Endothelial cell of umbilical vein (primary cell): ENCODE measurements at regions of chr1 and their contacts with region 1.

Region 1: GRCh38 chr1:151340870-151341754 is 5.9 kb downstream of the RFX5 start:
- DNase-seq: peak; percentile 81
- H3K4me3 ChIP-seq: no peak overlapping the region
- H3K27ac ChIP-seq: no peak overlapping the region
- H3K4me1 ChIP-seq: peaks cover 8% of the 10 kb centered on the region
- H3K27me3 ChIP-seq: no peaks in the 10 kb centered on the region
- CTCF ChIP-seq: peak; percentile 51 to 74
- POLR2A ChIP-seq: no peak

Region 2: GRCh38 chr1:151254217-151255213 is 86.6 kb before region 1 on chr1 and contains the start of gene PSMD4:
- CTCF ChIA-PET with region 1: interaction called, 11 read pairs
- POLR2A ChIA-PET with region 1: no interaction called
- dilution Hi-C with region 1: no loop called
- intact Hi-C with region 1: no loop called
- DNase-seq: peak; percentile 98
- H3K4me3 ChIP-seq: peak within 1 kb of the TSS; percentile 82 to 96 (median 87)
- H3K27ac ChIP-seq: peak within 1 kb of the TSS; percentile 80
- H3K4me1 ChIP-seq: peaks cover 7% of the 10 kb centered on the region
- H3K27me3 ChIP-seq: no peaks in the 10 kb centered on the region
- CTCF ChIP-seq: no peak
- POLR2A ChIP-seq: peak; percentile 96
- total RNA-seq, gene PSMD4: 181 and 184 TPM in 2 replicates

Region 3: DNA sequence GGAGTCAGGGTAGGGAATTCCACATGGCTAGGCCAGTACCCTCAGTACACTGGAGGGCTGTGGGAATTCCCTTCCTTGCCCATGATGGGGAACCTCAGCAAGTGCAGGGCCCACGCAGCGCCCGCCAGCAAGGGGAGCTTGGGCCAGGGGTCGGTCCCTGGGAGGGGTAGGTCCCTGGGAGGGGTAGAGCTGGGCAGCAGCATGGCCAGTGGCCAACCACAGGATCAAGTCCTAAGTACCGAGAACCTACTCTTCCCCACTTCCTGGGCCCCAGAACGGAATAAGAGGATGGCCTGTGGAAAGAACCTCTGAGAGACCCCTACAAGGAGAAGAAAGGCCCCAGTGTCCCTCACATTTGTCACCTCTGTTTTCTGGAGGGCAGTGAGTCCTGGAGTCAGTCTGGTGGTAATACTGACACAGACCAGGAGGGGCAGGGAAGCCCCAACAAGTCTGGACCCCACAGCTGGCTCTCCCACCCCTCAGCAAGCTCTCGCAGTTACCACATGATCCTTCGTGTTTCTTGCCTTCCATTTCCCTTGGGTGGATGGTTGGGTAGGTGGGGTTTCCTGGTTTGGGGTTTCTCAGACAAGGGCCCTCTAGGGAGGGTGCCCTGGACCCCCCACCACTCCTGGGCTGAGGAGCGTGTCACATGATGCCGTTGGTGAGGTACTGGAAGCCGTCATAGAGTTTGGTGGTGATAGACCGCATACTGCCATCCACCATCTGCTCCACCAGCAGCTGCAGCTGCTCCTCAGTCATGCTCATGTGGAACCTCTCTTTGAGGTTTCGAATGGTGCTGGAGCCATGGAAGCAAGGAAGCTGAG is 48.7 kb before region 1 on chr1:
- CTCF ChIA-PET with region 1: interaction called, 674 read pairs
- POLR2A ChIA-PET with region 1: no interaction called
- dilution Hi-C with region 1: no loop called
- intact Hi-C with region 1: no loop called
- DNase-seq: no peak
- H3K4me3 ChIP-seq: no peak overlapping the region
- H3K27ac ChIP-seq: no peak overlapping the region
- H3K4me1 ChIP-seq: no peaks in the 10 kb centered on the region
- H3K27me3 ChIP-seq: no peaks in the 10 kb centered on the region
- CTCF ChIP-seq: no peak
- POLR2A ChIP-seq: no peak

Region 4: GRCh38 chr1:151318745-151319374 is 22.3 kb before region 1 on chr1:
- CTCF ChIA-PET with region 1: interaction called, 674 read pairs
- POLR2A ChIA-PET with region 1: no interaction called
- dilution Hi-C with region 1: no loop called
- intact Hi-C with region 1: no loop called
- DNase-seq: no peak
- H3K4me3 ChIP-seq: no peak overlapping the region
- H3K27ac ChIP-seq: no peak overlapping the region
- H3K4me1 ChIP-seq: peaks cover 9% of the 10 kb centered on the region
- H3K27me3 ChIP-seq: no peaks in the 10 kb centered on the region
- CTCF ChIP-seq: no peak
- POLR2A ChIP-seq: no peak

Region 5: DNA sequence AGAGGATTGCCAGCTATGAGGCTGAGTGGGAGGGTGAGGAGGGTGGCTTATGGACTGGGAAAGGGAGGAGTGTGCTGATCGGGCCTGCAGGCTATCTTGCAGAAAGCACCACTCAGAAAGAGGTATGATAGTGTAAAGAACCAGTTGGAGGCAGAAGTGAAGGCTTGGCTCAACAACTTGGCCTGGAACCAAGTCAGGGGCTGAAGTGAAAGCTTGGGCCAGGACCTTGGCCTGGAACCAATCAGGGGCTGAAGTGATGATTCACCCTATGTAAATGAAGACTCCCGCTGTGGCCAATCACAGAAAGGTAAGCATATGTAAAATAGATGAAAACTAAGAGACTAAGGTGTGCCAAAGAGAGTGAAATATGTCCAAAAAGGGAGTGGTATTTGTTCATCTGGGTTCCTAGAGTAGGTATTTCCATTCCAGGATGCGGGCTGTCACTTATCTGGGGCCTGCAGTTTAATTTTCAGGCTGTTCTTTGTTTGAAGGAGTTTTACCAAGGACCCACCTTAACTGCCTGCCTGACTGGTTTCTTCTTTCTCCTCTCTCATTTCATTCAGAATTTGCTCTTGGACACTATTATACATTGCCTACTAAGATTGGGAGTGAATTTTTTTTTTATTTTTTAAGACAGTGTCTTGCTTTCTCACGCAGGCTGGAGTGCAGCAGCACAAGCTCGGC is 11.0 kb after region 1 on chr1:
- CTCF ChIA-PET with region 1: interaction called, 13 read pairs
- POLR2A ChIA-PET with region 1: no interaction called
- dilution Hi-C with region 1: no loop called
- intact Hi-C with region 1: no loop called
- DNase-seq: peak; percentile 33
- H3K4me3 ChIP-seq: no peak overlapping the region
- H3K27ac ChIP-seq: no peak overlapping the region
- H3K4me1 ChIP-seq: peaks cover 5% of the 10 kb centered on the region
- H3K27me3 ChIP-seq: no peaks in the 10 kb centered on the region
- CTCF ChIP-seq: no peak
- POLR2A ChIP-seq: no peak

Region 6: GRCh38 chr1:151399890-151400495 is 58.9 kb after region 1 on chr1:
- CTCF ChIA-PET with region 1: interaction called, 21 read pairs
- POLR2A ChIA-PET with region 1: no interaction called
- dilution Hi-C with region 1: no loop called
- intact Hi-C with region 1: no loop called
- DNase-seq: no peak
- H3K4me3 ChIP-seq: peak overlapping the region; percentile 52 to 66 (median 57)
- H3K27ac ChIP-seq: peak overlapping the region; percentile 79
- H3K4me1 ChIP-seq: peaks cover 6% of the 10 kb centered on the region
- H3K27me3 ChIP-seq: no peaks in the 10 kb centered on the region
- CTCF ChIP-seq: no peak
- POLR2A ChIP-seq: no peak